Activated CD4-positive, alpha-beta memory T cell treated with anti-CD3 and anti-CD28 coated beads, Interleukin-2, amount 10 ng/mL, durations not matched to agents 7 days and 5 days (primary cell): ENCODE measurements at regions of chr9 and their contacts with region 1.

Region 1: DNA sequence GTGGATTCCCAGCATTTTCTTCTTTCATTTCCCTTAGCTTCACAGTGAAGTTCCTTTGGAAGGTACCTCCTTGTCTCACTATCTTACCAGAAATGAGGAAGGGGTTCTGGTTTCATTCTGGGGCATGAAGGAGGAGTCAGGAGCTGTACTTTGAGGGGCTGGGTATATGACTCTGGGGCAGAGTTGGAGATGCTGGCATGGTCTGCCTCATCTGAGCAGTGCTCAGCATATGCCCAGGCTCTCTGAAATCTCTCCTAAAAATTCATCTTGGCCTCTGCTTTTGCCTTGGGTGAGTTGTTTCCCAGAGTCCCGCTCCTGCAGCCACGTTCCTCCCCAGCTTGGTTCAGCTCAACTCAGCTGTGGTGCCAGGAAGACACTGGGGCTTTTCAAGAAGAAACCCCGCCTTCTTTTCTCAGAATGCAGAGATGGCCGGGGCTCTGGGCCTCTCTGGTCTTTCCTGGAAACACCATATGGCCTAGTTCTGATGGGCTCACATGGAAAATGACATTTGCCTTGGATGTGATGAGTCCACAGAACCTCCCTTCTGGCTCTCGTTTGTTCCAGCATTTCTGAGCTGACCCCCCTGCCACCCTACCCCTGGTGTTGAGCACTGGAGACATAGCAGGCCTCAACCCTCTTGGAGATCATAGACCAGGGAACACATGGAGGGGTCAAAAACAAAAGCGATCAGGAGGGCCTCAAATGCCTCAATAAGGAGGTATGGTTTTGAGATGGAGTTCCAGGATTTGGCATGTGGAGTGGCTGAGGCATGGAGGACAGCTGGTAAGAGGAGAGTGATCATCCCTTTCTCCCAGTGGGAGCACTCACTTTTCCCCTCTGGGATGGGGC is 12.0 kb upstream of the TGFBR1 start:
- DNase-seq: peak; percentile 83
- H3K4me3 Mint-ChIP-seq: peak overlapping the region; percentile 41
- H3K27ac Mint-ChIP-seq: peak overlapping the region; percentile 100
- H3K4me1 Mint-ChIP-seq: peaks cover 68% of the 10 kb centered on the region
- H3K27me3 Mint-ChIP-seq: no peaks in the 10 kb centered on the region

Region 2: GRCh38 chr9:99019790-99020331 is 73.0 kb before region 1 on chr9:
- CTCF ChIA-PET with region 1: no interaction called
- POLR2A ChIA-PET with region 1: interaction called, 12 read pairs
- DNase-seq: no peak
- H3K4me3 Mint-ChIP-seq: no peak overlapping the region
- H3K27ac Mint-ChIP-seq: no peak overlapping the region
- H3K4me1 Mint-ChIP-seq: no peaks in the 10 kb centered on the region
- H3K27me3 Mint-ChIP-seq: peaks cover 7% of the 10 kb centered on the region

Region 3: GRCh38 chr9:99076483-99077171 is 16.2 kb before region 1 on chr9:
- CTCF ChIA-PET with region 1: interaction called, 11 read pairs
- POLR2A ChIA-PET with region 1: interaction called, 37 read pairs
- DNase-seq: peak; percentile 68
- H3K4me3 Mint-ChIP-seq: peak overlapping the region; percentile 5
- H3K27ac Mint-ChIP-seq: peak overlapping the region; percentile 95
- H3K4me1 Mint-ChIP-seq: peaks cover 36% of the 10 kb centered on the region
- H3K27me3 Mint-ChIP-seq: peaks cover 4% of the 10 kb centered on the region

Region 4: GRCh38 chr9:99118782-99119466 is 26.1 kb after region 1 on chr9:
- CTCF ChIA-PET with region 1: interaction called, 3 read pairs
- POLR2A ChIA-PET with region 1: interaction called, 15 read pairs
- DNase-seq: peak; percentile 74
- H3K4me3 Mint-ChIP-seq: peak overlapping the region; percentile 62
- H3K27ac Mint-ChIP-seq: peak overlapping the region; percentile 91
- H3K4me1 Mint-ChIP-seq: peaks cover 66% of the 10 kb centered on the region
- H3K27me3 Mint-ChIP-seq: no peaks in the 10 kb centered on the region

Region 5: GRCh38 chr9:99158629-99159028 is 65.8 kb after region 1 on chr9:
- CTCF ChIA-PET with region 1: no interaction called
- POLR2A ChIA-PET with region 1: no interaction called
- DNase-seq: no peak
- H3K4me3 Mint-ChIP-seq: no peak overlapping the region
- H3K27ac Mint-ChIP-seq: no peak overlapping the region
- H3K4me1 Mint-ChIP-seq: peaks cover 11% of the 10 kb centered on the region
- H3K27me3 Mint-ChIP-seq: peaks cover 47% of the 10 kb centered on the region